ENCODE measurements at regions of chr14 and their contacts with region 1.

Region 1: DNA sequence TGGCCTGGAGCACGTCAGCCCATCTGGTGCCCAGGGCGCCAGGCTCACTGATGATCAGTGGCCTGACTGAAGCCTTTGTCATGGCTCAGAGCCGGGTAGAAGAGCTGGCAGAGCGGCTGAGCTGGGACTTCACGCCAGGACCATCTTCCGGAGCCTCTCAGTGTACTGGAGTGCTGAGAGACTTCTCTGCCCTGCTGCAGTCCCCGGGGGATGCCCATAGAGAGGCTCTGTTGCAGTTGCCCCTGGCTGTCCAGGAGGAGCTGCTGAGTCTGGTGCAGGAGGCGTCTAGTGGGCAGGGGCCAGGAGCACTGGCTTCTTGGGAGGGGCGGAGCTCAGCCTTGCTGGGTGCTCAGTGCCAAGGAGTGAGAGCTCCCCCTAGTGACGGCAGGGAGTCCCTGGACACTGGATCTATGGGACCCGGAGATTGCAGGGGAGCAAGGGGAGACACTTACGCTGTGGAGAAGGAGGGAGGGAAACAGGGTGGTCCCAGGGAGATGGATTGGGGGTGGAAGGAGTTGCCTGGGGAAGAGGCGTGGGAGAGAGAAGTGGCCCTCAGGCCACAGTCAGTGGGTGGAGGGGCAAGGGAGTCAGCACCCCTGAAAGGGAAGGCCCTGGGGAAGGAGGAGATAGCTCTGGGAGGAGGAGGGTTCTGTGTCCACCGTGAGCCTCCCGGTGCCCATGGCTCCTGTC is 2.0 kb downstream of the KHNYN start:
- DNase-seq: peak; percentile 83
- H3K4me3 ChIP-seq: peak overlapping the region in 1 of 2 donors; percentile 68
- H3K27ac ChIP-seq: peak overlapping the region; percentile 95 to 96
- H3K4me1 ChIP-seq: peaks cover 20% of the 10 kb centered on the region
- H3K27me3 ChIP-seq: no peaks in the 10 kb centered on the region
- CTCF ChIP-seq: peak; percentile 84 to 96 (median 90)
- POLR2A ChIP-seq: no peak

Region 2: GRCh38 chr14:24332268-24332993 is 99.3 kb before region 1 on chr14:
- intact Hi-C with region 1: loop called (anchors 2 kb)
- DNase-seq: peak; percentile 71
- H3K4me3 ChIP-seq: peak overlapping the region; percentile 7 to 15
- H3K27ac ChIP-seq: no peak overlapping the region
- H3K4me1 ChIP-seq: peaks cover 5% of the 10 kb centered on the region
- H3K27me3 ChIP-seq: peaks cover 3% of the 10 kb centered on the region
- CTCF ChIP-seq: peak in 3 of 4 experiments; percentile 27 to 72 (median 65)
- POLR2A ChIP-seq: no peak

Region 3: GRCh38 chr14:24366721-24367513 is 64.8 kb before region 1 on chr14:
- intact Hi-C with region 1: loop called (anchors 1 kb)
- DNase-seq: peak; percentile 91
- H3K4me3 ChIP-seq: peak overlapping the region; percentile 46 to 48
- H3K27ac ChIP-seq: peak overlapping the region; percentile 85 to 92
- H3K4me1 ChIP-seq: no peaks in the 10 kb centered on the region
- H3K27me3 ChIP-seq: no peaks in the 10 kb centered on the region
- CTCF ChIP-seq: no peak
- POLR2A ChIP-seq: peak; percentile 22

Region 4: GRCh38 chr14:24392325-24393091 is 39.2 kb before region 1 on chr14:
- intact Hi-C with region 1: no loop called
- DNase-seq: no peak
- H3K4me3 ChIP-seq: no peak overlapping the region
- H3K27ac ChIP-seq: peak overlapping the region in 1 of 2 donors; percentile 45
- H3K4me1 ChIP-seq: no peaks in the 10 kb centered on the region
- H3K27me3 ChIP-seq: no peaks in the 10 kb centered on the region
- CTCF ChIP-seq: peak in 1 of 4 experiments; percentile 36
- POLR2A ChIP-seq: no peak